Prostate gland (tissue), 2 donors: ENCODE measurements at regions of chrX and their contacts with region 1.

Region 1: DNA sequence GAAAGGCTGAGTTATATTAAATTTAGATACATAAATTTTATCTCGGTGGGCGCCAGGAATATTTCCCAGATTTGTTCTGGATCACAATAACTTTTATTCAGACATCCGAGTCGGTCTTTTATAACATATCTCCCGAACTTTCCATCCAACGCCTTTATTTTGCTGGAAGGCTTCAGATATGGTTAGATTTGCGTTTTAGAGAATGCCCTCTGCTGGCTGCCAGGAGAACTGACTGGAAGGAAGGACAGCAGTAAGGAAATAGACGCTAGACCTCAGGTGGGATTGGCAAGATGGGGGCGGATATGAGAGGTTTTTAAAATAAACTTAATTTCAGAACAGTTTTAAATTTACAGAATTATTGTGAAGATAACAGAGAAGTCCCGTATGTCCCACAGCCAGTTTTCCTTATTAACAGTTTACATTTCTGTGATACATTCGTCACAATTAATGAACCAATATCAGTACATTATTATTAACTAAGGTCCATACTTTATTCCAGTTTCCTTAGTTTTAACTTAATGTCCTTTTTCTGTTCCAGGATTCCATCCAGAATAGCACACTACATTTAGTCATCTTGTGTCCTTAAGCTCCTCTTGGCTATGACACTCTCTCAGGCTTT is 4.6 kb upstream of the KANTR start:
- DNase-seq: peak; percentile 35
- H3K4me3 ChIP-seq: peak overlapping the region; percentile 23 to 27
- H3K27ac ChIP-seq: peak overlapping the region; percentile 88 to 94
- H3K4me1 ChIP-seq: no peaks in the 10 kb centered on the region
- H3K27me3 ChIP-seq: no peaks in the 10 kb centered on the region
- CTCF ChIP-seq: peak; percentile 40 to 76 (median 64)
- POLR2A ChIP-seq: no peak

Region 2: DNA sequence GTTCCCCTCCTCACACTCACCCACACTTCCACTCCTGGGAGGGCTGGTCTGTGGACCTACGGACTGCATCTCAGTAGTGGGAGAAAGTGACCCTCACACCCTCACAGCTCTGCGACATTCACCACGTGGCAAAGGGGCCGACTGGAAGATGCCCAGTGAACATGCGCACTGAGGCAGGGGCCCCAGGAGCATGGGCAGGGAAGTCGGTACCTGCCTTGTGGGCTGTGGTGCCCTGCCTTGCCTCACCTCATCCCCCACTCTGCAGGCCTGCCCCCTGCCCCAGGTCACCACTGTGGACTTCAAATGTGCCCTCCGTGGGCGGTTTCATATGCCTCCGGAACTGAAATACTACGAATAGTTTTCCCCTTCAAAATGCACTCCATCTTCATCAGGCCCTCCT is 526.2 kb before region 1 on chrX:
- intact Hi-C with region 1: no loop called
- DNase-seq: no peak
- H3K4me3 ChIP-seq: no peak overlapping the region
- H3K27ac ChIP-seq: no peak overlapping the region
- H3K4me1 ChIP-seq: no peaks in the 10 kb centered on the region
- H3K27me3 ChIP-seq: no peaks in the 10 kb centered on the region
- CTCF ChIP-seq: no peak
- POLR2A ChIP-seq: no peak

Region 3: GRCh38 chrX:53071604-53072417 is 17.5 kb before region 1 on chrX:
- intact Hi-C with region 1: loop called (anchors 1 kb)
- DNase-seq: peak; percentile 74
- H3K4me3 ChIP-seq: peak overlapping the region; percentile 16
- H3K27ac ChIP-seq: peak overlapping the region; percentile 67 to 74
- H3K4me1 ChIP-seq: no peaks in the 10 kb centered on the region
- H3K27me3 ChIP-seq: no peaks in the 10 kb centered on the region
- CTCF ChIP-seq: peak; percentile 14 to 74 (median 73)
- POLR2A ChIP-seq: no peak